ENCODE measurements at regions of chr5 and their contacts with region 1.

Region 1: DNA sequence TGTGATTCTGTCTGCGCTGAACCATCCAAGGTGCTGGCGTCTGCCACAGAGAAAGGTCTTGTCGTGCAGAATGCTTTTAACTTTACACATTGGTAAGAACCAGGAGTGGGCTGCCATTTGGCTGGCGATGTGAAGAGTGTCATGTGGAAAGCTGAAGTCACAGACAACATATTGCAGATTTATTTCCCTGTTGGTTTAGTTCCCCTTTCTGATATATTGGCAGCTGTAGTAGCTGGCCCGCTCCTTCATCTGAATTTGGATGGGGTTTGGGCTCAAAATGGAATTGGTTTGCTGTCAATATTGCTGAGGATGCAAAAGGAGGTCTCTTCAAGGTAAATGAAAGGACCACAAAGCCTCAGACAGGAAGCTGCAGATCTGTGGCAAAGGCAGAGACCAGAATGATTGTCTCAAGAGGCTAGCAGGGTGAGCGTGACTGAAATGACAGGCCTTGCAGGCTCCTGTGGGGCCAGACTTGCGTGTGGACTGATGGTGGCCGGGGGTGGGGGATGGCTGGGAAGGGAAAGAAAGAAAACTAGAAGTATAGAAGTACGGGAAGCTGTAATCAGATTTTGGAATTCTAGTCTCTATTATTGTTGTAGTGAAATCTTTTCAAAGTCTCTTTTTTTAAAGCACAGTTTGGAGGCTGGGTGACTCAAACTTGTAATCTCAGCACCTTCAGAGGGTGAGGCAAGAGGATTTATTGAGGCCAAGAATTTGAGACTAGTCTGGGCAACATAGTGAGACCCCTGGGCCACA is 25.1 kb upstream of the CD180 start:
- DNase-seq: peak in 7 of 10 donors; percentile 14 to 64 (median 42)
- ATAC-seq: peak; percentile 93 to 96
- H3K4me3 Mint-ChIP-seq: peak overlapping the region; percentile 58 to 82 (median 74)
- H3K27ac Mint-ChIP-seq: peak overlapping the region; percentile 72 to 96 (median 92)
- H3K4me1 Mint-ChIP-seq: peaks cover 44 to 67% (median 62%) of the 10 kb centered on the region in 4 donors
- H3K27me3 Mint-ChIP-seq: no peaks in the 10 kb centered on the region

Region 2: DNA sequence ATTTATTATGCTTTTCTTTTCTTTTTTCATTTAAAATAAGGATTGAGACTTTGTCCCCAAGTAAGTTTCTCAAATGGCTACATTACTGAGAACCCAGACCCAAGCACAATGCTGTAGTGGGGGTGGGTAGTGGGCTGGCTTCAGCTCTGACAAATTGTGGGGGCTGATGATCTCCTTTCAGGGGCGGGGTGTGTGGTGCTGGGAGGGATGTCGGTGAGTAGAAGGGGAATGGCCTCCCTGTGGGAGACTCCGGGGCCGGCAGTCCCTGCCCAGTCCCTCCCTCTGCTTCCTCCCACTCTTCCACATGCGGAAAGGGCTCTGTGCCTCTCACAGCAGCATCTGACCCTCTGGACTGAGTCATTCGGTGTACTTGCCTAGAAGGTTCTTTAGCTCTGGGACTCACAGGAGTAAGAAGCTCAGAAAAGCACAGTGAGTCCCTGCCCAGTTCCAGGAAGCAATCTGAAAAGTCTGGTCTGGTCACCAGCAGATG is 39.3 kb before region 1 on chr5:
- POLR2A ChIA-PET with region 1: no interaction called
- DNase-seq: no peak
- ATAC-seq: no peak
- H3K4me3 Mint-ChIP-seq: peak overlapping the region in 7 of 10 donors; percentile 19 to 50 (median 40)
- H3K27ac Mint-ChIP-seq: peak overlapping the region in 6 of 10 donors; percentile 43 to 91 (median 84)
- H3K4me1 Mint-ChIP-seq: peaks cover 34 to 70% (median 57%) of the 10 kb centered on the region in 4 donors
- H3K27me3 Mint-ChIP-seq: no peaks in the 10 kb centered on the region

Region 3: GRCh38 chr5:67209142-67209771 is 12.4 kb before region 1 on chr5:
- POLR2A ChIA-PET with region 1: interaction called, 24 read pairs
- DNase-seq: peak in 9 of 10 donors; percentile 34 to 81 (median 64)
- ATAC-seq: peak; percentile 45 to 50
- H3K4me3 Mint-ChIP-seq: peak overlapping the region in 4 of 10 donors; percentile 2 to 63 (median 41)
- H3K27ac Mint-ChIP-seq: peak overlapping the region; percentile 9 to 93 (median 87)
- H3K4me1 Mint-ChIP-seq: peaks cover 43 to 61% (median 59%) of the 10 kb centered on the region in 4 donors
- H3K27me3 Mint-ChIP-seq: no peaks in the 10 kb centered on the region